GM12878 (cell line): ENCODE measurements at regions of chr4 and their contacts with region 1.

Region 1: GRCh38 chr4:20684852-20685763 is 15.2 kb upstream of the PACRGL start:
- DNase-seq: no peak
- ATAC-seq: 0 out of 3 replicates have a peak, but pooled peaks have one; percentile 14
- H3K4me3 ChIP-seq: no peak overlapping the region
- H3K27ac ChIP-seq: no peak overlapping the region
- H3K4me1 ChIP-seq: no peaks in the 10 kb centered on the region
- H3K27me3 ChIP-seq: no peaks in the 10 kb centered on the region
- CTCF ChIP-seq: peak; percentile 31 to 53 (median 43); a peak in 4 of 6 replicates
- EP300 ChIP-seq: no peak
- POLR2A ChIP-seq: no peak
- RAD21 ChIP-seq: peak; percentile 76

Region 2: GRCh38 chr4:19224820-19225219 is 1460.3 kb before region 1 on chr4:
- CTCF ChIA-PET with region 1: no interaction called
- POLR2A ChIA-PET with region 1: no interaction called
- RAD21 ChIA-PET with region 1: no interaction called
- SMC1A ChIA-PET with region 1: no interaction called
- in situ Hi-C with region 1: loop called (anchors 25 kb)
- intact Hi-C with region 1: loop called (anchors 10 kb)
- DNase-seq: no peak
- ATAC-seq: no peak
- H3K4me3 ChIP-seq: no peak overlapping the region
- H3K27ac ChIP-seq: no peak overlapping the region
- H3K4me1 ChIP-seq: no peaks in the 10 kb centered on the region
- H3K27me3 ChIP-seq: no peaks in the 10 kb centered on the region
- CTCF ChIP-seq: peak in 1 of 3 experiments; percentile 14; a peak in 2 of 6 replicates
- EP300 ChIP-seq: no peak
- POLR2A ChIP-seq: no peak
- RAD21 ChIP-seq: 0 out of 2 replicates have a peak, but pooled peaks have one; percentile 20

Region 3: GRCh38 chr4:20395160-20395773 is 289.8 kb before region 1 on chr4:
- CTCF ChIA-PET with region 1: interaction called, 24 read pairs
- POLR2A ChIA-PET with region 1: no interaction called
- RAD21 ChIA-PET with region 1: interaction called, 6 read pairs
- SMC1A ChIA-PET with region 1: interaction called, 4 read pairs
- in situ Hi-C with region 1: no loop called
- intact Hi-C with region 1: loop called (anchors 1 kb)
- DNase-seq: no peak
- ATAC-seq: peak; percentile 61; the same call in 2 of the 3 replicates
- H3K4me3 ChIP-seq: no peak overlapping the region
- H3K27ac ChIP-seq: no peak overlapping the region
- H3K4me1 ChIP-seq: no peaks in the 10 kb centered on the region
- H3K27me3 ChIP-seq: no peaks in the 10 kb centered on the region
- CTCF ChIP-seq: peak; percentile 57 to 66 (median 63)
- EP300 ChIP-seq: no peak
- POLR2A ChIP-seq: no peak
- RAD21 ChIP-seq: peak; percentile 51

Region 4: DNA sequence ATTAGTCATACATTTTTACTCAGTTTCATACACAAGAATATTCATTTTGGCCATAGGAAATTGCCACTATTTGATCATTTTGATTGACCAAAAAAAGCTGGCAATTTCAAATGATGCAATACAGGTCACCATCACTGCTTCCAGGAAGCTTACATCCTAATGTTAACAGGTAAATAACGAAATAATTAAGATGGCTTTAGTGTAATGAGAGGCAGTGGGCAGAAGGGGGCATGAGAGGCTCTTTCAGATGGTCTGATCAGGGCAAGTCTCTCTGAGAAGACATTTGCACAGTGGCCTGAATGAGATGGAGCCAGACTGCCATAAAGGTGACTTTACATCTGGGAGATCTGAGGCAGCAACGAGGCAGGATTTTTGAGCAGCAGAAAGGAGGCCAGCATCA is 262.7 kb before region 1 on chr4:
- CTCF ChIA-PET with region 1: interaction called, 25 read pairs
- POLR2A ChIA-PET with region 1: no interaction called
- RAD21 ChIA-PET with region 1: interaction called, 3 read pairs
- SMC1A ChIA-PET with region 1: interaction called, 18 read pairs
- in situ Hi-C with region 1: loop called (anchors 5 kb)
- intact Hi-C with region 1: loop called (anchors 1 kb)
- DNase-seq: no peak
- ATAC-seq: peak; percentile 79
- H3K4me3 ChIP-seq: no peak overlapping the region
- H3K27ac ChIP-seq: no peak overlapping the region
- H3K4me1 ChIP-seq: no peaks in the 10 kb centered on the region
- H3K27me3 ChIP-seq: no peaks in the 10 kb centered on the region
- CTCF ChIP-seq: peak; percentile 35 to 61 (median 37)
- EP300 ChIP-seq: no peak
- POLR2A ChIP-seq: no peak
- RAD21 ChIP-seq: peak; percentile 49

Region 5: DNA sequence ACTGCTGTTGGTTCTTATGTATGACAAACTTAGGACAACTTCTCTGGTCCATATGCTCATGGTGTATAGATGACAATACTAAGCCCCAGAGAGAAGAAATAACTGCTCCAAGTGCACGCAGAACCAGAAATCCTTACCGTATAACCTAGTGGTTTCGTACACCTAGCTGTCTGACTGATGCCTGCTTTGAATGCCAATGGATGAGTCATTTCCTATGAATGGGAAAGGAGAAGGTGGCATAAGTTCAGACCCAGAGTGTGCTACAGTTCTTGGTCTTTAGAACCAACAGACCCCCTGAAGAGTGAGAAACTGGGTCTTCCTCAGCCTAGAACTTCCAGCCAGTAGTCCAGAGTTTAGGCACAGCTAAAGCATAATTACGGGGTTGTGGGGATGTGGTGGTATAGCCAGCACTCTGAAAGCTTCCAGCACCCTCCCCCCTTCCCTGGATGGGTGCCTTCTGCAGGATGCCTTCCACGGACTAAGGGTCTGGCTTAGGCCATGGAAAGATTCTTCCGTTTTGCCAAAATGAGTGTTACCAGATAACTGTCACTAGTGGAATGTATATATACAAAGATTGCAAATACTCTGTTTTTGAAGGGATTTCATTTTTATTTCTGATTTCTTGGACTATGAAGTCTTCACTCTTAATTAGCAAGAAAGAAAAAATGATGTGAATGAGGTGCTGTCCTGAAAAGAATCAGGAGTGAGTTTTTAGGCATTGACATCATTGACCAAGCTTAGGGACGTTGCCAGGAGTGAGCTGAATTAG is 69.4 kb before region 1 on chr4:
- CTCF ChIA-PET with region 1: no interaction called
- POLR2A ChIA-PET with region 1: no interaction called
- RAD21 ChIA-PET with region 1: no interaction called
- SMC1A ChIA-PET with region 1: no interaction called
- in situ Hi-C with region 1: no loop called
- intact Hi-C with region 1: no loop called
- DNase-seq: no peak
- ATAC-seq: no peak
- H3K4me3 ChIP-seq: no peak overlapping the region
- H3K27ac ChIP-seq: no peak overlapping the region
- H3K4me1 ChIP-seq: no peaks in the 10 kb centered on the region
- H3K27me3 ChIP-seq: no peaks in the 10 kb centered on the region
- CTCF ChIP-seq: no peak
- EP300 ChIP-seq: no peak
- POLR2A ChIP-seq: no peak
- RAD21 ChIP-seq: no peak

Region 6: GRCh38 chr4:20700007-20700761 is 15.1 kb after region 1 on chr4 and contains the start of gene PACRGL:
- CTCF ChIA-PET with region 1: interaction called, 49 read pairs
- POLR2A ChIA-PET with region 1: no interaction called
- RAD21 ChIA-PET with region 1: interaction called, 3 read pairs
- SMC1A ChIA-PET with region 1: interaction called, 4 read pairs
- in situ Hi-C with region 1: no loop called
- intact Hi-C with region 1: no loop called
- DNase-seq: peak; percentile 50
- ATAC-seq: peak; percentile 100
- H3K4me3 ChIP-seq: peak within 1 kb of the TSS; percentile 77
- H3K27ac ChIP-seq: peak within 1 kb of the TSS; percentile 48
- H3K4me1 ChIP-seq: peaks cover 4% of the 10 kb centered on the region; the same call in 1 of the 2 replicates
- H3K27me3 ChIP-seq: no peaks in the 10 kb centered on the region
- CTCF ChIP-seq: no peak
- EP300 ChIP-seq: no peak
- POLR2A ChIP-seq: peak; percentile 82
- RAD21 ChIP-seq: no peak
- polyA plus RNA-seq, gene PACRGL: 1.7 to 2.1 TPM

Region 7: DNA sequence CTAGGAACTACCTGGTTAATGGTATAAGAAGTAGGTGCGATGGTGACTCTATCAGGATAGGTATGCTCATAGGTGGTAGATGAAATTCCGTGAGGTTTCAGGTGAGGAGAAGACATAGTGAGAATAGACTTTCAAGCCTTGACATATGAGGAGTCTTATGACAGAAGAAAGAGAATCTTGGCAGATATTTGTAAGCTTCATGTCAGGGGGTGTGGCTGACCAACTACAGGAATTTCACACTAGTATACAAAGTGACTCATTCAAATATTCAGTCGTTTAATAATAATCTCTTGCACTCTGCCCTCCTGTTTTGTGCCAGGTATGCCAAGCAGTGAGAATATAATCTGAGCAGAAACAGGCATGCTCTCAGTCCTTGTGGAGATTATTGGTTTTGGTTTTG is 37.9 kb after region 1 on chr4:
- CTCF ChIA-PET with region 1: no interaction called
- POLR2A ChIA-PET with region 1: no interaction called
- RAD21 ChIA-PET with region 1: no interaction called
- SMC1A ChIA-PET with region 1: no interaction called
- in situ Hi-C with region 1: no loop called
- intact Hi-C with region 1: no loop called
- DNase-seq: no peak
- ATAC-seq: no peak
- H3K4me3 ChIP-seq: no peak overlapping the region
- H3K27ac ChIP-seq: no peak overlapping the region
- H3K4me1 ChIP-seq: no peaks in the 10 kb centered on the region
- H3K27me3 ChIP-seq: no peaks in the 10 kb centered on the region
- CTCF ChIP-seq: no peak
- EP300 ChIP-seq: no peak
- POLR2A ChIP-seq: no peak
- RAD21 ChIP-seq: no peak